Astrocyte of the cerebellum (primary cell): ENCODE measurements at regions of chr17 and their contacts with region 1.

Region 1: GRCh38 chr17:44844390-44844830 is 3.3 kb upstream of the HIGD1B start:
- DNase-seq: no peak
- H3K4me3 ChIP-seq: no peak overlapping the region
- CTCF ChIP-seq: no peak

Region 2: GRCh38 chr17:44749980-44750318 is 94.5 kb before region 1 on chr17:
- in situ Hi-C with region 1: loop called (anchors 5 kb)
- DNase-seq: no peak
- H3K4me3 ChIP-seq: no peak overlapping the region
- CTCF ChIP-seq: no peak

Region 3: DNA sequence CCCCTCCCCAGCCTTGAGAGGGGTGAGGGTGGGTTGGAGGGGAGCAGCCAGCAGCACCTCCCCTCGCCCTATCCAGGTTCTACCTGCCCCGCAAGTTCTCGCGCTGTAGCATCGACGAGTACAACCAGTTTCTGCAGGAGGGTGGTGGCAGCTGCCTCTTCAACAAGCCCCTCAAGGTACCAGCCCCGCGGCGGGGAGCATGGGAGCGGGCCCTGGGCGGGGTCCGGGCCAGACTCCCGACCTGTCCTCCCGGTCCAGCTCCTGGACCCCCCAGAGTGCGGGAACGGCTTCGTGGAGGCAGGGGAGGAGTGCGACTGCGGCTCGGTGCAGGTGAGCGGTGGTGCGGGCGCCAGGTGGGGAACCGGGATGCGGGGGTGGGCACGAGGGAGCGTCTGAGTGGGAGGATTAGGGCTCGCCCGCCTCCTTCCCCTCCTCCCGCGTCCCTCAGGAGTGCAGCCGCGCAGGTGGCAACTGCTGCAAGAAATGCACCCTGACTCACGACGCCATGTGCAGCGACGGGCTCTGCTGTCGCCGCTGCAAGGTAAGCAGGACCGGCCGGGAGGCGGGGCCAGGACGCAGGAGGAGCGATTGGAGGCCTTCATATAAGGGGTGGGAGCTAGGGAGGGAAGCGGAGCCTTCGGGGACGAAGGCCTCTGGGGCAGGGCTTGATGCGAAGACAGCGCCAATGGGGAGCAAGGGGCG is 69.1 kb before region 1 on chr17:
- in situ Hi-C with region 1: no loop called
- DNase-seq: peak; percentile 94
- H3K4me3 ChIP-seq: peak overlapping the region; percentile 63
- CTCF ChIP-seq: no peak

Region 4: DNA sequence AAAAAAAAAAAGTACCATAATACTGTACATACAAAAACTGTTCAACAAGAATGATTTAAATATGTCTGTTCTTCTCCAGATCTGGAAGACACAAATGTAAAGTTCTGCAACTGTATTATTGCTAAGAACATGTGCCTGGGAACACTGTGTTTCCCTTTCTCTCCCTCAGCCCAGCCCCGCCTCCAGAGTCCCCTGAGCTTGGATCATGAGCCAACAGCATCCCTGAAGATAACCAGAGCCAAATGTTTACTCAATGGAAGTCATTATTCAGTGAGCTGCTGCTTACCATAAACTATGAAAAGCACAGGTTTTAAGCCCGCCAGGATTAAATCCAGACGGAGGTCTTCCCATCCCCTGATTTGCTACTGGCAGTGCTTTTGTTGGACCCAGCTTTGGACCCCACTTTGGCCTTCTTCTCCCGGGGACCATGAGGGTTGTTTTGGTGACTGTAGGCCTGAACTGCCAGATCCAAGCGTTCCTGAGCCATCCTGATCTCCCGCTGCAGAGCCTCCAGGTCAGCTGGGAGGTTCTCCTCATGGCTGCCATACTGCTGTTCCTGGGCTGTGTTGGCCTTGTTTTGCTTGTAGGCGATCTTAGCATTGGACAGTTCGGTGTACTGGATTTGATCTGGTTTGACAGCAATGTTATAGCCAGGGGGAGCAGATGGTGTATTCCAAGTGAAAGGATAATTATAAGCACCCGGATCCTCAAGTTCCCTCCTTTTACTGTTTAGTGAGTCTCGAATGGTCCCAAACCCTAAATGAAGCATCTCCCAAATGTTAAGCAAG is 39.9 kb before region 1 on chr17:
- in situ Hi-C with region 1: no loop called
- DNase-seq: no peak
- H3K4me3 ChIP-seq: no peak overlapping the region
- CTCF ChIP-seq: no peak

Region 5: GRCh38 chr17:44878627-44879221 is 34.3 kb after region 1 on chr17:
- in situ Hi-C with region 1: loop called (anchors 5 kb)
- DNase-seq: no peak
- H3K4me3 ChIP-seq: no peak overlapping the region
- CTCF ChIP-seq: peak; percentile 67